ENCODE measurements at regions of chr16 and their contacts with region 1.

Region 1: GRCh38 chr16:66650707-66651473 is 45.7 kb downstream of the CMTM4 start:
- DNase-seq: peak; percentile 12
- H3K4me3 ChIP-seq: peak overlapping the region; percentile 0; the same call in 1 of the 2 replicates
- CTCF ChIP-seq: peak; percentile 90

Region 2: DNA sequence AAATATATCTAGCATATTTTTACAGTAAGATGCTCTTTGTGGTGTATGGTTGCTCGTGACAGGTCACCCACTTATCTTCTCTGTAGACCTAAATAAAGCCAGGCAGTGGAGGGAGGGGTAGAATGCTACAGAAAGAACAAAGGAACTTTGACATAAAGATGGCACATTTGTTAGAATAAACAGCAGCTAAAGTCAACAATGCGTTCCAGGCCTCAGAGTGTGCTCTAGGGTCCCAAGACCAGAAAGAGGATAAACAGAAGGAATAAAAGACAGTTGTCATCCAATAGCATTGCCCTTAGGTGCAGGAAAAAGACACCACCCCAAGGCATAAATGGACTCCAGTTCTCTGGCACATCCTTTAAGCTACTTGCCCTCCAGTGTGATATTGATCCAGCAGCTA is 1006.1 kb before region 1 on chr16:
- CTCF ChIA-PET with region 1: no interaction called
- POLR2A ChIA-PET with region 1: no interaction called
- DNase-seq: no peak
- H3K4me3 ChIP-seq: no peak overlapping the region
- CTCF ChIP-seq: no peak

Region 3: DNA sequence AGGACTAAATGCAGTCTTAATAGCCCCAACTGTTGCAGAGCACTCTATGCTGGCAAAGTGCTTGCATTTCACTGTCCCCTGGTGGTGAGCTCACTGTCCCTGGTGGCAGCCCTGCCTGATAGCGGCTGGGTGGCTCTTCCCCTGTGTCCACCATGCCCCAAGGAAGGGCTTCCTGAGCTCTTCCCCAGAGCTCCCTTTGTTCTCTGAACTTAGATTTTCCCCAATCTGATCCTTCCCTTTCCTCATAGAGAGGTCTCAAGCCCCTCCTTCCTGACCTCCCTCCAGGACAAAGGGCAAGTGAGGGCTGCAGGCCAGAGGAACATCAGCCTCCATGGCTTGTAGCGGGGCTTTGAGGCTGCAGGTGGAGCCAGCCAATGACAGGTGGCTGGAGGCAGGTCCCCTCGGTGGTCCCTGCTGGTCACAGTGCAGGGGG is 206.8 kb before region 1 on chr16:
- CTCF ChIA-PET with region 1: no interaction called
- POLR2A ChIA-PET with region 1: no interaction called
- DNase-seq: no peak
- H3K4me3 ChIP-seq: no peak overlapping the region
- CTCF ChIP-seq: no peak

Region 4: GRCh38 chr16:66618588-66619375 is 32.1 kb before region 1 on chr16:
- CTCF ChIA-PET with region 1: interaction called, 26 read pairs
- POLR2A ChIA-PET with region 1: interaction called, 5 read pairs
- DNase-seq: peak; percentile 95
- H3K4me3 ChIP-seq: no peak overlapping the region
- CTCF ChIP-seq: no peak

Region 5: DNA sequence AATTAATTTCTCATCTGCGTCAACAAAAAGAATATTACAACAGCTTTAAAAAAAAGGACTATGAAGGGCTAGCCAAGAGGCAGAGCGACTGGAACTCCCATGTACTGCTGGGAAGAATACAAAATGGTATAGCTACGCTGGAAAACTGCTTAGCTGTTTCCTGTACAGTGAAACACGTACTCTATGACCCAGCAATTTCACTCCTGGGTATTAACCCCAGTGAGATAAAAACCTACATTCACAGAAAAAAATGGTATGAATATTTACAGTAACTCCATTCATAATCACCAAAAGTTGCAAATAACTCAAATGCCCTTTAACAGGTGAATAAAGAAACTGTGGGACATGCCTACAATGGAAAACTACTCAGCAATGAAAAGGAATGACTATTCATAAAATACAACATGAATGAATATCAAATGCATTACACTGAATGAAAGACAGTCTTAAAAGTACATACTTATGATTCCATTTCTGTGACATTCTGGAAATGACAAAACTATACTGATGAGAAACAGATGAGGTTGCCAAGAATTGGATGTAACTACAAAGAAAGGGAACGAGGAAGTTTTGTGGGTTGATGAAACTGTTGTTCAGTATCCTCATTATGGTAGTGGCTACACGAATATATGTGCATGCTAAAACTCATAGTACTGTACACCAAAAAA is 18.0 kb after region 1 on chr16:
- CTCF ChIA-PET with region 1: interaction called, 146 read pairs
- POLR2A ChIA-PET with region 1: no interaction called
- DNase-seq: no peak
- H3K4me3 ChIP-seq: no peak overlapping the region
- CTCF ChIP-seq: no peak

Region 6: GRCh38 chr16:66696669-66697630 is 46.1 kb after region 1 on chr16 and contains the start of gene CMTM4:
- CTCF ChIA-PET with region 1: interaction called, 18 read pairs
- POLR2A ChIA-PET with region 1: no interaction called
- DNase-seq: no peak
- H3K4me3 ChIP-seq: peak within 1 kb of the TSS; percentile 67
- CTCF ChIP-seq: peak; percentile 2

Region 7: GRCh38 chr16:66740010-66740409 is 89.1 kb after region 1 on chr16:
- CTCF ChIA-PET with region 1: interaction called, 12 read pairs
- POLR2A ChIA-PET with region 1: interaction called, 3 read pairs
- DNase-seq: no peak
- H3K4me3 ChIP-seq: no peak overlapping the region
- CTCF ChIP-seq: peak; percentile 44